ENCODE measurements at regions of chr1 and their contacts with region 1.

Region 1: DNA sequence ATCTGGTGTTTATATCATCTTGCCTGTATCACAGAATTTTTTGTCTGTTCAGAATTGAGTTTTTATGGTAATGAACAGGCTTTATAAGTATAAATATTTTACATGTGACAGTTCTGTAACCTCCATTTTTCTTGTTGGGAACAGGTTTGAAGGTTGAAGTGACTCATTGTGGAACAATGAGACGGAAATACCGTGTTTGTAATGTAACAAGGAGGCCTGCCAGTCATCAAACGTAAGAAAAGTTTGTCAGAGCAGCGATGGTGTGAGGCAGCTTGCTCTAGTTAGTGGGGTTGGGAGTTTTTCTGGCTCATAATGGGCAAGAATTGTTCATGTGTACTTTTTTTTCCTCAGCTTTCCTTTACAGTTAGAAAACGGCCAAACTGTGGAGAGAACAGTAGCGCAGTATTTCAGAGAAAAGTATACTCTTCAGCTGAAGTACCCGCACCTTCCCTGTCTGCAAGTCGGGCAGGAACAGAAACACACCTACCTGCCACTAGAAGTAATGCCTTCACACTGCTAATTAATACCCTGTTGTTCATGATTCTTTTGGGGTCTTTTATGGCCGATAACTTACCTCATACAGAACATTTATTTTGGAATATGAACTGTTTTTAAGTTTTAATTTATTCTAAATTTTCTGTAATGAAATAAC is 75.2 kb upstream of the TEKT2 start:
- DNase-seq: no peak
- H3K4me3 ChIP-seq: no peak overlapping the region
- H3K27ac ChIP-seq: no peak overlapping the region
- H3K4me1 ChIP-seq: no peaks in the 10 kb centered on the region
- H3K27me3 ChIP-seq: no peaks in the 10 kb centered on the region

Region 2: GRCh38 chr1:36040238-36040637 is 31.6 kb after region 1 on chr1:
- CTCF ChIA-PET with region 1: no interaction called
- POLR2A ChIA-PET with region 1: no interaction called
- DNase-seq: no peak
- H3K4me3 ChIP-seq: no peak overlapping the region
- H3K27ac ChIP-seq: no peak overlapping the region
- H3K4me1 ChIP-seq: peaks cover 0 to 3% (median under 1%) of the 10 kb centered on the region in 4 experiments
- H3K27me3 ChIP-seq: no peaks in the 10 kb centered on the region

Region 3: GRCh38 chr1:36123356-36123755 is 114.7 kb after region 1 on chr1:
- CTCF ChIA-PET with region 1: no interaction called
- POLR2A ChIA-PET with region 1: interaction called, 11 read pairs
- DNase-seq: peak; percentile 52 to 82 (median 81)
- H3K4me3 ChIP-seq: peak overlapping the region in 2 of 7 experiments; percentile 34 to 53
- H3K27ac ChIP-seq: no peak overlapping the region
- H3K4me1 ChIP-seq: peaks cover 0 to 23% (median 19%) of the 10 kb centered on the region in 4 experiments
- H3K27me3 ChIP-seq: peaks cover 0 to 31% (median 5%) of the 10 kb centered on the region in 5 experiments

Measured in common myeloid progenitor, CD34-positive (primary cell).